ENCODE measurements at regions of chr5 and their contacts with region 1.

Region 1: GRCh38 chr5:151659001-151659754 is 27.5 kb downstream of the SPARC start:
- DNase-seq: peak; percentile 70
- ATAC-seq: peak; percentile 99
- H3K4me3 ChIP-seq: no peak overlapping the region
- H3K27ac ChIP-seq: no peak overlapping the region
- H3K4me1 ChIP-seq: peaks cover 3 to 18% of the 10 kb centered on the region in 2 experiments; a peak in 3 of 4 replicates
- H3K27me3 ChIP-seq: no peaks in the 10 kb centered on the region
- CTCF ChIP-seq: peak; percentile 80 to 97 (median 88)
- POLR2A ChIP-seq: no peak
- RAD21 ChIP-seq: peak; percentile 95

Region 2: DNA sequence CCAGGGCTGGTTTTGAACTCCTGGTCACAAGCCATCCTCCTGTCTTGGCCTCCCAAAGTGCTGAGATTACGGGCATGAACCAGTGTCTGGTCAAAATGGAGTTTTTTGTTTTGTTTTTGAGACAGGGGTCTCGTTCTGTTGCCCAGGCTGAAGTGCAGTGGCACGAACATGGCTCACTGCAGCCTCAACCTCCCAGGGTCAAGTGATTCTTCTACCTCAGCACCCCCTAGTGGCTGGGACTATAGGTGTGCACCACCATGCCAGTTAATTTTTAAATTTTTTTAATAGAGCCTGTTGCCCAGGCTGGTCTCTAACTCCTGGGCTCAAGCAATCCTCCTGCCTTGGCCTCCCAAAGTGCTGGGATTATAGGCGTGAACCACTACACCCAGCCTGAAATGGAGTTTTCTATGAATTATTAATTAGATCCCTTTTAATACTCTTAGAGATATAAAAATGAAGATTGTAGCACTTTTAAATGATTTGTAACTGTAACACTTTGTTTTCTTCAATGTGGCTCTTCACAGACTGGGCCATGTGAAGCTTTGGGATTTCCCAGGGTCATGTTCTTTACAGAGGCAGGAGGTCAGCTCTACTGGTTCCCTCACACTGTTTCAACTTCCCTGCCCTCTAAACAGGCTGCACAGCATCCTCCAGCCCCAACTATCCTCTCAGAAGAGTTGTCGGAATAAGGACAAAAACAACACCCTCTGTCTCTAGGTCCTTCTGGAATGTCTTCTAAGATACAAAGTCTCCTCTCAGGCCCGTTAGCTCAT is 60.2 kb after region 1 on chr5:
- CTCF ChIA-PET with region 1: interaction called, 8 read pairs
- POLR2A ChIA-PET with region 1: no interaction called
- RAD21 ChIA-PET with region 1: interaction called in 1 of 2 experiments, 3 read pairs
- intact Hi-C with region 1: loop called (anchors 2 kb)
- DNase-seq: no peak
- ATAC-seq: peak; percentile 92
- H3K4me3 ChIP-seq: no peak overlapping the region
- H3K27ac ChIP-seq: no peak overlapping the region
- H3K4me1 ChIP-seq: peaks cover 0 to 8% of the 10 kb centered on the region in 2 experiments; a peak in 2 of 4 replicates
- H3K27me3 ChIP-seq: no peaks in the 10 kb centered on the region
- CTCF ChIP-seq: peak; percentile 63 to 65 (median 64)
- POLR2A ChIP-seq: no peak
- RAD21 ChIP-seq: peak; percentile 68

Measured in HCT116 (cell line).